Mammary epithelial cell (primary cell): ENCODE measurements at regions of chr10 and their contacts with region 1.

Region 1: DNA sequence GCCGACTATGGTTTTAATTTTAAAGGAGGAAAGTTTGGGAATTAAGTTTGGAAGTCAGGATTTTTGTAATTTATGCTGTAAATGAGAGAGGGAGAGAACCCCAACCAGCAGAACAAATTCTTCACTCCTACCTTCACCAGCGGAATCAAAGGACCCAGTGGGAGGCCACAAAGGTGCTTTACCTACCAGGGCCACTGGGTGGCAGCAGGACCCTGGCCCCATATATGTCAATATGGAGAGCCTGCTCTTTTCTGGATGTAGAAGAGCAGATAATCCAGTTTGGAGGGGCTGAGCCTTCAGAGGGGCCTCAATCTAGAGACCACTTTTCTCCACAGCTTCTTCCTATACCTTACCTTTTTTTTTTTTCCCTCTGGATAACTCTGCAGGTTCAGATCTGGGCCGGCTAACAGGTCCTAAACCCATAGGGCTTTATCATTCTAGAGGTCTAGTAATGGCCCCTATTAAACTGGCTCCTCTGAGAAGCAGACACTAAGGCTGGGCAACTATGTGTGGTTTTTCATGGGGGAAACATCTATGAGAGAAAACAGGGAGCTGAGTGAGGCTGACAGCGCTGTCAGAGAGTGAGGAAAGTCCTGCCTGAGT is 8.5 kb upstream of the SCD start:
- DNase-seq: peak; percentile 38
- H3K4me3 ChIP-seq: no peak overlapping the region
- H3K27ac ChIP-seq: no peak overlapping the region
- H3K4me1 ChIP-seq: no peaks in the 10 kb centered on the region
- H3K27me3 ChIP-seq: no peaks in the 10 kb centered on the region
- CTCF ChIP-seq: peak; percentile 89 to 95

Region 2: DNA sequence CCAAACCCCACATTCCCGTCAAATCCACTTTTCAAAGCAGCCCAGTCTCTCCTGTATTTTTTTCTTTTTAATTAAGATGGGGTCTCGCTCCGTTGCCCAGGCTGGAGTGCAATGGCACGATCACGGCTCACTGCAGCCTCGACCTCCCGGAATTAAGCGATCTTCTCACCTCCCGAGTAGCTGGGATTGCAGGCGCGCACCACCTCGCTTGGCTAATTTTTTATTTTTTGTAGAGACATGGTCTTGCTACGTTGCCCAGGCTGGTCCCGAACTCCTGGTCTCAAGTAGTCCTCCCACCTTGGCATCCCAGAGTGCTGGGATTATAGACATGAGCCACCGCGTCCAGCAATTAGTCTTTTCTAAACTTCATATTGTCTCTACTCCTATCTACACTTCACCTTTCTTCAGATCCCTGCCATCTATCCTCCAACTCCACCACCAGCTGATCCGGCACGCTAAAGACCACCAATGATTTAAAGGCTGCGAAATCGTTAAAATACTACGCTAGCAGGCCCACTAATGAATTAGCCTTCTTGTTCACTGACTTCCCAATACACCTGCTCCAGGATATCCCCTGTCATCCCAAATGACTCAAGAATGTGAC is 108.6 kb before region 1 on chr10:
- CTCF ChIA-PET with region 1: no interaction called
- dilution Hi-C with region 1: loop called (anchors 5 kb)
- in situ Hi-C with region 1: no loop called
- intact Hi-C with region 1: no loop called
- DNase-seq: no peak
- H3K4me3 ChIP-seq: peak overlapping the region; percentile 53 to 82 (median 77)
- H3K27ac ChIP-seq: peak overlapping the region; percentile 71
- H3K4me1 ChIP-seq: peaks cover 4% of the 10 kb centered on the region
- H3K27me3 ChIP-seq: no peaks in the 10 kb centered on the region
- CTCF ChIP-seq: no peak

Region 3: DNA sequence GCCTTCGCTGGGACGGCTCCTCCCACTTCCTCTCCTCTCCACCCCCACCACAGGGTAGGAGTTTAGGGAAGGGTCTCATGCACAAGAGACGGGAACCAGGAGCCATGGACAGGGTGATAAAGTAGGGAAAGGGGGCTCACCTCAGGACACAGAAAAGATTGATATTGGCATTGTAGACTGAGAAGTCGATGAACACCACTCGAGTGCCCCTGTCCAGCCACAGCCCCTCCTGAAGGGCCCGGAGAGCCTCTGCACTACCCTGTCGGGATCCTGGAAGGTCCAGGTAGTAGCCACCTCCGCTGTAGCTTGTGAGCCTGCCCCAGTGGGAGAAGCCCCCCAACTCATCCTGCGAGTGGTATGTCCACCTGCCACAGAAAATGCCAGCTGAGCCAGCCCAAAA is 41.3 kb before region 1 on chr10:
- CTCF ChIA-PET with region 1: interaction called, 5 read pairs
- dilution Hi-C with region 1: loop called (anchors 5 kb)
- in situ Hi-C with region 1: no loop called
- intact Hi-C with region 1: no loop called
- DNase-seq: no peak
- H3K4me3 ChIP-seq: no peak overlapping the region
- H3K27ac ChIP-seq: no peak overlapping the region
- H3K4me1 ChIP-seq: no peaks in the 10 kb centered on the region
- H3K27me3 ChIP-seq: peaks cover 5% of the 10 kb centered on the region
- CTCF ChIP-seq: no peak

Region 4: GRCh38 chr10:100303724-100304319 is 34.7 kb before region 1 on chr10:
- CTCF ChIA-PET with region 1: interaction called, 5 read pairs
- dilution Hi-C with region 1: loop called (anchors 5 kb)
- in situ Hi-C with region 1: no loop called
- intact Hi-C with region 1: loop called (anchors 1 kb)
- DNase-seq: peak; percentile 15
- H3K4me3 ChIP-seq: no peak overlapping the region
- H3K27ac ChIP-seq: no peak overlapping the region
- H3K4me1 ChIP-seq: no peaks in the 10 kb centered on the region
- H3K27me3 ChIP-seq: no peaks in the 10 kb centered on the region
- CTCF ChIP-seq: peak; percentile 70 to 76

Region 5: DNA sequence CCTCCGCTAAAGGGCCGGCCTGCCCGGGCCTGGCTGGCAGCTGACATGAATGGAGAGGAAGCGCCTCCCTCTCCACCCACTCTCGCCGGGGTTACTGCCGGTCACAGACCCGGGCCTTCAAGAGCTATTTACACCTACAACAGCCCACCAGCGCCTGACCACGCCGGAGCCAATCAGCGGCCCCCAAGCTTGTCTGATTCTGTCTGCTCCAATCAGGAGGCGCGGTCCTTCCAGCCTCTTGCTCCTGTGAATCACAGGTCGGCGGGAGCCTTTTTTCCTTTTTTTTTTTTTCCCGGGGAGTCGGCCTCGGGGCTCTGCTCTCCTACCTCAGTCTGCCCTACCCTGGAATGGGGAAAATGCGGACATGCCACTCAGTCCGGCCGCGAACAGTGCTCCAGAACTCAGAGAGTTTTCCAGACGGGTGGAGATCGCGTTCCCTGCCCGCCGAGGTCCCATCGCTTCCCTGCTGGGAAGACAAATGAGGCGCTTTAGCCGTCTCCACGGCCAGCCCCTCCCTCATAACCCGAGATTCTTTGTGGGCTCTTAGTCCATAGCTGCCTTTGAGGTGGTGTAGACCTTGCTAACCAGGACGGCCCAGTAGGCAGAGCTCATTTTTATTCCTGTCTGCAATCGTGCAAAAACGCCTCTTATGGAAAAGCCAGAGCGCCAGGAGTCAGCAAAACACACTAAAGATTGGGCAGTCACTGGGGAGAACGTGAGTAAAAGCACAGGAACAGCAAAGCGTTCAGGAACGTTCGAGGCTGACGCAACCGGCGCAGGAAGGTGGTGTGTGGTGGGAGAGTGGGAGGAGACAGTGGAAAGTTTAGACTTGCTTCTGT is 35.0 kb after region 1 on chr10:
- CTCF ChIA-PET with region 1: no interaction called
- dilution Hi-C with region 1: no loop called
- in situ Hi-C with region 1: no loop called
- intact Hi-C with region 1: loop called (anchors 5 kb)
- DNase-seq: peak; percentile 100
- H3K4me3 ChIP-seq: peak overlapping the region; percentile 48 to 63 (median 56)
- H3K27ac ChIP-seq: peak overlapping the region; percentile 99
- H3K4me1 ChIP-seq: peaks cover 56% of the 10 kb centered on the region
- H3K27me3 ChIP-seq: no peaks in the 10 kb centered on the region
- CTCF ChIP-seq: no peak

Region 6: GRCh38 chr10:100508691-100509150 is 170.2 kb after region 1 on chr10:
- CTCF ChIA-PET with region 1: interaction called, 7 read pairs
- dilution Hi-C with region 1: no loop called
- in situ Hi-C with region 1: loop called (anchors 5 kb)
- intact Hi-C with region 1: loop called (anchors 1 kb)
- DNase-seq: peak; percentile 47
- H3K4me3 ChIP-seq: no peak overlapping the region
- H3K27ac ChIP-seq: no peak overlapping the region
- H3K4me1 ChIP-seq: peaks cover 32% of the 10 kb centered on the region
- H3K27me3 ChIP-seq: no peaks in the 10 kb centered on the region
- CTCF ChIP-seq: peak; percentile 77 to 79